ENCODE measurements at regions of chr1 and their contacts with region 1.

Region 1: DNA sequence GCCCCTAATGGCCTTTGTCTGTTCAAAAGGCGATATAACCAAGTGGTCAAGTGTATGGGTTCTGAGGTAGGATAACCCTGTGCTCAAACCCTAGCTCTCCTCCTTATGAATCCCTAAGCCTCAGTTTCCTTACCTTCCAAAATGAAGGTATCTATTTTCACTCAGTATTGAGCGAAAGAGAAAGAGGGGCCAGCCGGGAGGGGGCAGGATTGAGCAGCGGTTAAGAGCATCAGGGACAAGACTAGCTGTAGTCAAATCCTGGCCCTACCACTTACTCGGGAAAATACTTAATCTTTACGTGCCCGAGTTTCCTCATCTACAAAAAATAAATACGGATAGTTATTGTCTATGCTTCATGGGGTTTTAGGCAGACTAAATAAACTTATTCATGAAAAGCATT is 25.7 kb downstream of the LY9 start:
- DNase-seq: peak; percentile 61
- ATAC-seq: peak; percentile 80
- H3K4me3 Mint-ChIP-seq: no peak overlapping the region
- H3K27ac Mint-ChIP-seq: no peak overlapping the region
- H3K4me1 Mint-ChIP-seq: peaks cover 12% of the 10 kb centered on the region
- H3K27me3 Mint-ChIP-seq: no peaks in the 10 kb centered on the region
- CTCF ChIP-seq: peak; percentile 14; the same call in 1 of the 2 replicates

Region 2: DNA sequence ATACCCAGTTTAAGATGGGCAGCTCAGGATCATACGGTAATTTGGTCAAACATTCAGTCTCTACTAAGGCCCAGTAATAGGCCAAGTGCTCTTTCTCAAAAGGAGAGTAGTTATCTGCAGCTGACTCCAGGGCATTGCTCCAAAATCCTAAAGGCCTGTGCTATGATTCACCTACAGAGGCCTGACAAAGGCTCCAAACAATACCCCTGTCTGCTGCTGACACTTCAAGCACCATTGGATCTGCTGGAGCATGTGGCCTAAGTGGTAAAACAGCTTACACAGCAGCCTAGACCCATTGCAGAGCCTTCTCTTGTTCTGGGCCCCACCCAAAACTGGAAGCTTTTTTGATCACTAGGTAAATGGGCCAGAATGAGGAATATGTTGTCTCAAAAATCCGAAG is 59.7 kb before region 1 on chr1:
- CTCF ChIA-PET with region 1: no interaction called
- POLR2A ChIA-PET with region 1: no interaction called
- DNase-seq: no peak
- ATAC-seq: no peak
- H3K4me3 Mint-ChIP-seq: no peak overlapping the region
- H3K27ac Mint-ChIP-seq: no peak overlapping the region
- H3K4me1 Mint-ChIP-seq: no peaks in the 10 kb centered on the region
- H3K27me3 Mint-ChIP-seq: peaks cover 3% of the 10 kb centered on the region; the same call in 1 of the 2 replicates
- CTCF ChIP-seq: no peak

Region 3: DNA sequence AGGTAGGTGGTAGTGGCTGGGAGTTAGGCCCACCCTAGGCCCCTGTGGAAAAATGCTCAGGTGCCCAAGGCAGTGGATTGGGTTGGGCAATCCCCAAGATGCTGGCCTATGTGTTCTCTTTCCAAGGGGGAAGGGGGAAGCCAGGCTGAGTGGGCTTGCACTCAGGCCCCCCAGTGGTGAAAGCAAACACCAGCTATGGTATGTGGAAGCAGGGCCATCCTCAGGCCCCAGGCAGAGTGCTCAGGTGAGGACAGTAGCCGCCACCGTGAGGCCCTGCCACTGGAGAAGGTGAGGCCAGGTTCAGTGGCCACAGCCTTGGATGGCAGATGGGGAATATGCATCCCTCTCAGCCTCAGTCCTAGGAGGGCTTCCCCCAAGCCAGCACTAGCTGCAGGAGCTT is 13.9 kb before region 1 on chr1:
- CTCF ChIA-PET with region 1: interaction called, 13 read pairs
- POLR2A ChIA-PET with region 1: no interaction called
- DNase-seq: no peak
- ATAC-seq: peak; percentile 80
- H3K4me3 Mint-ChIP-seq: no peak overlapping the region
- H3K27ac Mint-ChIP-seq: no peak overlapping the region
- H3K4me1 Mint-ChIP-seq: peaks cover 20% of the 10 kb centered on the region
- H3K27me3 Mint-ChIP-seq: no peaks in the 10 kb centered on the region; the same call in 1 of the 2 replicates
- CTCF ChIP-seq: no peak

Region 4: DNA sequence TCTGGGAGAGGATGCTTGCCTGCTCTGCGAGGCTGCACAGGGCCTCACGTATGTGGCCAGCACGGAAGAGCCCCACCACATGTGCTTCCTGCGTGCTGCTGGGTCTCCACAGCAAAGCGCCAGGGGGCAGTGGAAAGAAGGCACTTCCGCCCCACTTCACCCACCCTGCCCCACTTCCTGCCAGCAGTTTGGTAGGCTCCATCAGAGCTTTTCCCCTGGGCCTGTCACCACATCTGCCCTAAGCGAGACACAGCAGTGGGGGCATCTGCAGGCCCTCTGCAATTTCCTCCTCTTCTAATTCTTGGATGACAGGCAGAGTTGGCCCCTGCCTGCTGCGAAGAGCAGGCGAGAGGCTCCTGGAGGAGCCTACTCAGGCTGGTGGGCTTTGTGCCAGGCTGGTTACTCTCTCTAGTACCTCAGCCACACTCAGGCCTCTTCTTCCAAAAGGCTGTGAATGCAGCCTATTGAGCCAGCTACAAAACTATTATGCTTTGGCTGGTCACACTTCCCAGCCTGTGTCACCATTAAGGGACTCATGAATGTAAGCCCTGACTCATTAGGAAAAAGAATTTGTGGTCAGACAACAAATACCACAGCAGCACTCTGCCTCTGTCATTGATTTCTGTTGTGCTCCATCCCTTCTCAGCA is 16.1 kb after region 1 on chr1:
- CTCF ChIA-PET with region 1: interaction called, 14 read pairs
- POLR2A ChIA-PET with region 1: no interaction called
- DNase-seq: no peak
- ATAC-seq: peak; percentile 46; the same call in 1 of the 2 replicates
- H3K4me3 Mint-ChIP-seq: no peak overlapping the region
- H3K27ac Mint-ChIP-seq: no peak overlapping the region
- H3K4me1 Mint-ChIP-seq: peaks cover 21% of the 10 kb centered on the region
- H3K27me3 Mint-ChIP-seq: no peaks in the 10 kb centered on the region; the same call in 1 of the 2 replicates
- CTCF ChIP-seq: no peak

Region 5: DNA sequence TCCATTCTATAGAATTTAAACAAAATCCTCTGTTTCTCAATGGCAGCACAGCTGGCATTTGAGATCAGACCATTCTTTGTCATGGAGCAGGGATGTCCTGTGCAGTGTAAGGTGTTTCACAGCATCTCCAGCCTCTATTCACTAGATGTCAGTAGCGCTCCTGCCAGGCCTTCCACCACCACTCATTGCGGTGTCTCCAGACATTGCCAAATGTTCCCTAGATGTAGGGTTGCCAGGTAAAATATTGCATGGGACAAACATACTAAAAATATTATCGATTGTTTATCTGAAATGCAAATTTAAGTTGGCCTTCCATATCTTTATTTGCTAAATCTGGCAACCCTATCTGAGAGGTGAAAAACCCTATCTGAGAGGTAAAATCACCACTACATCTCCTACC is 121.3 kb after region 1 on chr1:
- CTCF ChIA-PET with region 1: no interaction called
- POLR2A ChIA-PET with region 1: no interaction called
- DNase-seq: no peak
- ATAC-seq: peak; percentile 86
- H3K4me3 Mint-ChIP-seq: no peak overlapping the region
- H3K27ac Mint-ChIP-seq: no peak overlapping the region
- H3K4me1 Mint-ChIP-seq: peaks cover 7% of the 10 kb centered on the region
- H3K27me3 Mint-ChIP-seq: peaks cover 5% of the 10 kb centered on the region; the same call in 1 of the 2 replicates
- CTCF ChIP-seq: no peak

Region 6: DNA sequence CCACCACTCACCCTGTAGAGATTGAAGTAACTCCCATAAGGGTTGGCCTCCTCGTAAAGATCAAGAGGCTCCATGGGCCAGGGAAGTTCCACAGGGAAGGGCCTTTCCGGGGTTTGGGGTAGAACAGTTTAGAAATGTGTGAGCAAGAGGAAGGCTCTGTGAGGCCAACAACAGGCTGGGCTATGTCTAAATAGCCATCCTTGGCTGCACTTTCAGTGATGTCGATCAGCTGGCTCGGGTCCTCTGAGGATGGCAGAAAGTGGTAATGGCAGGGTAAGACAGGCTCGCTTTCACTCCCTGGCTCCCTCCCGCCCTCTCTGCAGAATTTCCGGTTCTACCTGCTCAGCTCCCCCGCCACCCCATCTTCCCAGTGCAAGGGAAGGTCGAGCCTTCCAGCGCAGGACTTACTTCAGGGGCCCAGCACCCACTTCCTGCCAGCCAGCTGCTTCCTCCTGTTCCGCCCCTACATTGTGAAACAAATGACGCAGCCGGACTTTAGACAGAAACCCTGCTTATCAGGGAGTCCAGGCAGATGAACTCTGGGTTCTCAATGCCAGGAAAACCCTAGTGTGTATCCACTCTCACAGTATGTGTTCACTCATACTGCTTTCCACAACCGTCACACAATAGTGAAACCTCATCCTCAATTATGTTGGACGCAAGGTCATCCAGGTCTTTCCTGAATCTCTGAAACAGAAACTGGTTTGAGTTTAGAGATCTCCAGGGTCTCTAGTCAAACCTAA is 192.0 kb after region 1 on chr1:
- CTCF ChIA-PET with region 1: no interaction called
- POLR2A ChIA-PET with region 1: no interaction called
- DNase-seq: peak; percentile 79
- ATAC-seq: peak; percentile 93
- H3K4me3 Mint-ChIP-seq: peak overlapping the region; percentile 57
- H3K27ac Mint-ChIP-seq: peak overlapping the region; percentile 98
- H3K4me1 Mint-ChIP-seq: peaks cover 63% of the 10 kb centered on the region
- H3K27me3 Mint-ChIP-seq: no peaks in the 10 kb centered on the region
- CTCF ChIP-seq: no peak